ENCODE measurements at regions of chr3 and their contacts with region 1.

Region 1: DNA sequence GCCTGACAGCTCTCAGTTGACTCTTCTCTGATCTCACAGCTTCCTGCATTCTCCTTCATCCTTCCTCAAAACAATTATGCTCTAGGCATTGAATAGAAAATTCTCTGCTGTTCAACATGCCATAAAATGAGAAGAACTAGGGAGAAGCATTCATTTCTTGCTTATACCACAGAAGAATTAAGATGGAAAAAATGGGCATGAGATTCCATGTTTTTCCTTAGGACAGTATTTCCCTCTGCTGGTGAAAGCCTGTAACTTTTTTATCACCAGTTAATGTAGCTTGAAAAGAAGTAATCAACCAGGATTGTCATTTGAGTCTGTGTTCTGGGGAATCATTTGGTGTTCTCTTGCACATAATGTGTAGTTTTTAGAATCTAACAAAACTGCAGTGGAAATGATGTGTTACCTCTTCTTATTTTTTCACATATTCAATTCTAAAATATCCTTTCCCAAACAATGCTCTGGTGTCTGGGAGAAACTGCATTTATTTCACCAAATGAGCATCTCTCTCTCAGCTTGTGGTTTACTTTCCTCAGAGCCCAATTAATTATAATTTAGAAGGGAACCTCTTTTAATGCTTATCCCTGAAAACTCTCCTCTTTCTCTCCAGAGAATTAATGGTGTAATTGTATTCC is 92.8 kb upstream of the DCBLD2 start:
- DNase-seq: no peak
- H3K4me3 ChIP-seq: no peak overlapping the region
- H3K27ac ChIP-seq: no peak overlapping the region
- H3K4me1 ChIP-seq: no peaks in the 10 kb centered on the region
- H3K27me3 ChIP-seq: no peaks in the 10 kb centered on the region
- CTCF ChIP-seq: peak in 2 of 3 experiments; percentile 48 to 49; a peak in 2 of 4 replicates
- EP300 ChIP-seq: no peak
- POLR2A ChIP-seq: no peak
- RAD21 ChIP-seq: peak; percentile 73 to 75

Region 2: DNA sequence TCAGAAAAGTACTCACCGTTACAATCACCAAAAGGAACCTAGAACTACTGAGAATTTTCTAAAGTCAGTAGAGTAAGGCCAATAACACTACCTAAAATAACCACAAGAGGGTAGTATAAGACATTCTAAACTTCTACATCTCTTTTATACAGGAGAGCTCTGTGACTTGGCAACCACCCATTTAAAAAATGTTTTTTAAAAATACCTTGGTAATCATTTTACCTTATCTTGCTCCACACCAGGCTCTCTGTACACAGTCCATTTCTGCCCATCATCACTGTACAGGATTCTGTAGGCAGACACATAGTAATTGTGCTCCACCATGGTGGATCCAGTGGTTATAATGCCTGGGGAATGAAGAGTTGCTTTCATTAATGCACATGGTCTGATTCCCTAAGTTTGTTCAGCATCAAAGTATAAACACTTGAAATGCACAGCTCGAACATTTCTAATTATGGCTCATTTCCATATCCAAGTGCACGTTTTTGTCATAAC is 176.7 kb before region 1 on chr3:
- CTCF ChIA-PET with region 1: interaction called, 146 read pairs
- POLR2A ChIA-PET with region 1: interaction called, 3 read pairs
- DNase-seq: no peak
- H3K4me3 ChIP-seq: no peak overlapping the region
- H3K27ac ChIP-seq: no peak overlapping the region
- H3K4me1 ChIP-seq: no peaks in the 10 kb centered on the region; a peak in 1 of 7 replicates
- H3K27me3 ChIP-seq: no peaks in the 10 kb centered on the region
- CTCF ChIP-seq: peak in 2 of 3 experiments; percentile 22 to 60; a peak in 2 of 4 replicates
- EP300 ChIP-seq: no peak
- POLR2A ChIP-seq: no peak
- RAD21 ChIP-seq: peak; percentile 64

Region 3: GRCh38 chr3:98901392-98902350 is 92.6 kb before region 1 on chr3 and contains the start of gene DCBLD2:
- CTCF ChIA-PET with region 1: interaction called, 15 read pairs
- POLR2A ChIA-PET with region 1: interaction called, 3 read pairs
- DNase-seq: peak; percentile 93 to 96
- H3K4me3 ChIP-seq: peak within 1 kb of the TSS; percentile 86 to 100 (median 92)
- H3K27ac ChIP-seq: peak within 1 kb of the TSS; percentile 93
- H3K4me1 ChIP-seq: peaks cover 0 to 11% (median 4%) of the 10 kb centered on the region in 4 experiments; a peak in 4 of 7 replicates
- H3K27me3 ChIP-seq: no peaks in the 10 kb centered on the region
- CTCF ChIP-seq: no peak
- EP300 ChIP-seq: no peak
- POLR2A ChIP-seq: peak; percentile 97
- RAD21 ChIP-seq: no peak; a peak in 1 of 4 replicates
- total RNA-seq, gene DCBLD2: 59.1 and 63.8 TPM in 2 replicates

Region 4: GRCh38 chr3:98980915-98981596 is 13.2 kb before region 1 on chr3:
- CTCF ChIA-PET with region 1: interaction called, 13 read pairs
- POLR2A ChIA-PET with region 1: no interaction called
- DNase-seq: no peak
- H3K4me3 ChIP-seq: no peak overlapping the region
- H3K27ac ChIP-seq: no peak overlapping the region
- H3K4me1 ChIP-seq: no peaks in the 10 kb centered on the region; a peak in 3 of 7 replicates
- H3K27me3 ChIP-seq: no peaks in the 10 kb centered on the region
- CTCF ChIP-seq: no peak
- EP300 ChIP-seq: no peak
- POLR2A ChIP-seq: no peak
- RAD21 ChIP-seq: no peak

Region 5: DNA sequence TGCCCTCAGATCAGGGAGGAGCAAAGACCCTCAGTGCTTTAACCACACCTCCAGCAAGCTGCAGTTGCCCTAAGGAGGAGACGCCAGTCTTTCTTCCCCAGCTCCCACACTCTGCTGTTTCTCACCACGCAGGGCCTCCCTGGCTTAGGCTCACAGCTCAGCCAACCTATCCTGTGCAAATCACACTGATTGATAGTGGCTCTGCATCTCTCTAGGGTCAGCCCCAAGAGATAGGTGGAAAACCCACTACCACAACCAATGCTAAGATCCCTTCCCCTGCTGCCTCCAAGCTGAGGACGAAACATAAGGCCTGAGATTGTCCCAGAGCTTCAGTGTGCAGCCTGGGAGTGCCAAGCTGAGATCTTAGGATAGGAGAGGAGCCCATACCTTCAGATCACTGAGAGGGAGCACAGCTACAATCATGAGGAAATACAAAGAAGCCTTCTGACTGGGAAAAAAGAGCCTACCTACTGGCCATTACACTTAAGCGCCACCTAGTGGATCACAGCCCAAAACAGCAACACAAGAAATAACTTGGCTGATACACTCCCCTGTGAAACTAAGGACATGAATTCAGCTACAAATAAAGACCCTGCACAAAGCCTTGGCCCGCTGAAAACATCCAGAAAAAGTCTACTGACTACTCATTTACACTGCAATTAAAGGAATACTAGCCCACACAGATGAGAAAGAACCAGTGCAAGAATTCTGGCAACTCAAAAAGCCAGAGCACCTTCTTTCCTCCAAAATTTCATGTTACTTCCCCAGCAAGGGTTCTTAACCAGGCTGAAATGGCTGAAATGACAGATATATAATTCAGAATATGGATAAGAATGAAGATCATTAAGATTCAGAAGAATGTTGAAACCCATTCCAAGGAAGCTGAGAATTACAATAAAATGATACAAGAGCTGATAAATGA is 178.8 kb after region 1 on chr3:
- CTCF ChIA-PET with region 1: interaction called, 10 read pairs
- POLR2A ChIA-PET with region 1: no interaction called
- DNase-seq: peak in 1 of 2 experiments; percentile 69
- H3K4me3 ChIP-seq: no peak overlapping the region
- H3K27ac ChIP-seq: no peak overlapping the region
- H3K4me1 ChIP-seq: 0 out of 7 replicates have a peak, but pooled peaks cover 0 to 1% (median 0%) of the 10 kb centered on the region in 4 experiments
- H3K27me3 ChIP-seq: no peaks in the 10 kb centered on the region
- CTCF ChIP-seq: peak in 2 of 3 experiments; percentile 76 to 77; a peak in 3 of 4 replicates
- EP300 ChIP-seq: no peak
- POLR2A ChIP-seq: no peak
- RAD21 ChIP-seq: peak; percentile 78 to 80